Activated naive CD8-positive, alpha-beta T cell treated with anti-CD3 and anti-CD28 coated beads, Interleukin-2, amount 10 ng/mL, durations not matched to agents 7 days and 5 days (primary cell): ENCODE measurements at regions of chr6 and their contacts with region 1.

Region 1: DNA sequence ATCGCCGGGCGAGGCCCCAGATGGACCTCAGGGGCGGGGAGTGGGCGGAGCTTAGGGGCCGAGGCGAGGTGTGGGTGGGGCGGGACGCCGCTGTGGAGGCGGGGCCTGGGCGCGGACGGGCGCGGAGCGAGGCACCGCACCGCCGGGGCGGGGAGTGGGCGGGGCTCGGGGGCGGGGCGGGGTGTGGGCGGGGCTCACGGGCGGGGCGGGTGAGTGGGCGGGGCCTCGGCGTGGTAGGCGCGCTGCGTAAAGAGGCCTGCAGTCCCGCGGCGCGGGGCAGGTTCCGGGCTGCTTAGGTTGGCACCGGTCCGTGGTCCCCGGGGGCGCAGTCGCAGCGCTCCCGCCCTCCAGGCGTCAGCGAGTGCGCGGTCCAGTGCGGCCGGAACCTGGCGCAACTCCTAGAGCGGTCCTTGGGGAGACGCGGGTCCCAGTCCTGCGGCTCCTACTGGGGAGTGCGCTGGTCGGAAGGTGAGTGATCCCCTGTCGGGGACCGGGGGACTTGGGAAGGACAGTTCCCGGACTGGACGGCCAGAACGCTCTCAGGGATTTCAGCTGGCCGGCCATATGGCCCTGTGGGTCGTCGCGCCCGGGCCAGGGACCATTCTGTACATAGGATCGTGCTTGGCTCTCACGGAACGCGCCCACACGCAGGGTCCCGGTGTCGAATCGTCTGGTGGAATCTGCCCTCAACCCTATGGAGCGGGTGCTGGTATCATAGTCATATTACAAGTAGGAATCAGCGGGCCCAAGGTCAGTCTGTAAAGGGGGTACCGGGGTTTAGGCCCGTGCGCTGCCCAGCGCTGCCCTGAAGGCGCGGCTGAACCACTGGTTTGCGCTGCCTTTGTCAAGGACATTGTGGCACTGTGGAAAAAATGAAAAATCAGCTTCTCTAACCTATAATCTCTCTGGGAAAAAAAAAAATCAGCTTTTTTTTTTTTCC is at the start of gene NQO2:
- DNase-seq: peak; percentile 96
- ATAC-seq: peak; percentile 83
- H3K4me3 Mint-ChIP-seq: peak within 1 kb of the TSS; percentile 97
- H3K27ac Mint-ChIP-seq: peak within 1 kb of the TSS; percentile 86
- H3K4me1 Mint-ChIP-seq: peaks cover 23% of the 10 kb centered on the region
- H3K27me3 Mint-ChIP-seq: peaks cover 2% of the 10 kb centered on the region
- total RNA-seq, gene NQO2: 17.0 to 17.5 TPM

Region 2: GRCh38 chr6:3023663-3024483 is 24.0 kb after region 1 on chr6:
- POLR2A ChIA-PET with region 1: interaction called, 12 read pairs
- DNase-seq: peak; percentile 88
- ATAC-seq: peak; percentile 85
- H3K4me3 Mint-ChIP-seq: peak overlapping the region; percentile 90
- H3K27ac Mint-ChIP-seq: peak overlapping the region; percentile 92
- H3K4me1 Mint-ChIP-seq: peaks cover 40% of the 10 kb centered on the region
- H3K27me3 Mint-ChIP-seq: peaks cover under 1% of the 10 kb centered on the region

Region 3: GRCh38 chr6:3052481-3053230 is 52.8 kb after region 1 on chr6:
- POLR2A ChIA-PET with region 1: interaction called, 26 read pairs
- DNase-seq: no peak
- ATAC-seq: no peak
- H3K4me3 Mint-ChIP-seq: peak overlapping the region; percentile 73
- H3K27ac Mint-ChIP-seq: peak overlapping the region; percentile 70
- H3K4me1 Mint-ChIP-seq: peaks cover 23% of the 10 kb centered on the region
- H3K27me3 Mint-ChIP-seq: peaks cover 23% of the 10 kb centered on the region

Region 4: GRCh38 chr6:3068329-3069214 is 68.7 kb after region 1 on chr6 and contains the start of gene RIPK1:
- POLR2A ChIA-PET with region 1: interaction called, 19 read pairs
- DNase-seq: peak; percentile 99
- ATAC-seq: peak; percentile 80
- H3K4me3 Mint-ChIP-seq: peak within 1 kb of the TSS; percentile 95
- H3K27ac Mint-ChIP-seq: peak within 1 kb of the TSS; percentile 96
- H3K4me1 Mint-ChIP-seq: peaks cover 44% of the 10 kb centered on the region
- H3K27me3 Mint-ChIP-seq: no peaks in the 10 kb centered on the region
- total RNA-seq, gene RIPK1: 31.9 to 32.6 TPM

Region 5: DNA sequence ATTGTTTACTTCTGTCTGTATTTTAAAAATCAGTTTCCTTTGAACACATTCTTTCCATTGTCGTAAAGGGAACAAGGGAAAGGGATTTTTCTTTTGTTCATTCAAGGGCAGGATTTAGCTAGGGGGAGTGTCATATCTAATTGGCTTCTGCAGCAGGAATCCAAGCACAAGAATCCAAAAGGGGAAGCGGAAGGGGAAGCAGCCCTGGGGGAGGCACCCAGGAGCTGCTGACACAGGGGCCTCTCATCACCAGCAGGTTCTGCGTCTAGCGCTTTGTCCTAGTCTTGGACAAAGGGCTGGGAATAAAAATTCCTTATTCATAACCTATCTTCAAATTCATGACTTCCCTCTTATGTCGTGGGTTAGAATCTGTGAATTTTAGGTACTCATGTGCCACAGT is 82.1 kb after region 1 on chr6:
- POLR2A ChIA-PET with region 1: no interaction called
- DNase-seq: no peak
- ATAC-seq: no peak
- H3K4me3 Mint-ChIP-seq: no peak overlapping the region
- H3K27ac Mint-ChIP-seq: no peak overlapping the region
- H3K4me1 Mint-ChIP-seq: peaks cover 4% of the 10 kb centered on the region
- H3K27me3 Mint-ChIP-seq: no peaks in the 10 kb centered on the region

Region 6: DNA sequence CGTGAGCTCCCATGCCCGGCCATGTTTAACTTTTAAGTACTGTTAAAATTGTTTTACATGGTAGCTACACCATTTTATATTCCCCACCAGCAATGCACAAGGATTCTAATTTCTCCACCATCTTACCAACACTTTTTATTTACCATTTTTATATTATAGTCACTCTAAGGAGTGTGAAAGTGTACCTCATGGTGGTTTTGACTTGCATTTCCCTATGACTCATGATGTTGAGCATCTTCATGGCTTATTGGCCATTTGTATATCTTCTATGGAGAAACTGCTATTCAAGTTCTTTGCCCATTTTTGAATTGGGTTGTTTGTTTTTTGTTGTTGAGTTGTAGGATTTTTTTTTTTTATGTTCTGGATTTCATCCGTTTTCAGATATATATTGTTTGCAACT is 103.0 kb after region 1 on chr6:
- POLR2A ChIA-PET with region 1: no interaction called
- DNase-seq: no peak
- ATAC-seq: no peak
- H3K4me3 Mint-ChIP-seq: no peak overlapping the region
- H3K27ac Mint-ChIP-seq: no peak overlapping the region
- H3K4me1 Mint-ChIP-seq: peaks cover 2% of the 10 kb centered on the region
- H3K27me3 Mint-ChIP-seq: no peaks in the 10 kb centered on the region